ENCODE measurements at regions of chr12 and their contacts with region 1.

Region 1: GRCh38 chr12:121536899-121537813 is 43.7 kb downstream of the KDM2B start:
- DNase-seq: peak; percentile 79
- ATAC-seq: peak; percentile 45
- H3K4me3 Mint-ChIP-seq: peak overlapping the region; percentile 91
- H3K27ac Mint-ChIP-seq: peak overlapping the region; percentile 93
- H3K4me1 Mint-ChIP-seq: peaks cover 64% of the 10 kb centered on the region
- H3K27me3 Mint-ChIP-seq: no peaks in the 10 kb centered on the region
- CTCF ChIP-seq: no peak

Region 2: DNA sequence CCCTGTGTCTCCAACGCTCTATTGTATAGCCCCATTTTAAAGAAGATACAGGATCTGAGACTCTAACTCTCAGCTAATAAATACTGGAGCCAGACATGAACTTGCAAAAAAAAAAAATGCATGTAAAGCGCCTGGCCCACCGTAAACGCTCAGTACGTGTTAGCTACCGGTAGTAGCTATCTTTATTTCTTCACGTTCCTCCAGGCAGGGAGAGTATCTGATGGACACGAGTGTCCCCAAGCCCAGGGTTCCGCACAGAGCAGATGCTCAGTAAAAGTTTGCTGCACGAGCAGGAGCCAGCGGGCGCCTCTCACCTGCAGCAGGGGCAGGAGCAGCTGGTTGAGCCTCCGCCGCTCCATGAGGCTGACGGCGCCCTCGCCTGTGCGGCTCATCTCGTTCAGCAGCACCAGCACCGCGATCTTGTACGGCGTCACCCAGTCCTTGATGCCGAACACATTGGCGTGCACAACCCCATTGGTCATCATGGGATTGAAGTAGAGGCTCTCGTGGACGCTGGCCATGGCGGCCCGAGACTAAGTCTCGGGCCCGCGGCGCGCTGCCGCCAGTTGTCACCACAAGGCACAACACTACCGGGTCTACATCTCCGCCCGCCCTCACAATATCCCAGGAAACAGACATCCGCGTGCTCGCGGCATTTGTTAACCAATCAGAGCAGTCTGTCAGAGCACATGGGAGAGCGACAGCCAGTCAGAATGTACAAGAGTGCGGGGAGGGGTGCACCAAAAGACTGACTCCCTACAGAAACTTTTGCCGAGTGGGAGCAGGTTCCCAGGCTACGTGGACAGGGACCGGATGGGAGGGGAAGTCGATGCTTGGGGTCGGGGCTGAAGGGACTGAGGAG is 185.1 kb before region 1 on chr12 and contains the start of gene ANAPC5:
- CTCF ChIA-PET with region 1: no interaction called
- POLR2A ChIA-PET with region 1: interaction called, 13 read pairs
- intact Hi-C with region 1: no loop called
- DNase-seq: peak; percentile 73
- ATAC-seq: peak; percentile 99
- H3K4me3 Mint-ChIP-seq: peak within 1 kb of the TSS; percentile 94
- H3K27ac Mint-ChIP-seq: peak within 1 kb of the TSS; percentile 91
- H3K4me1 Mint-ChIP-seq: peaks cover 28% of the 10 kb centered on the region
- H3K27me3 Mint-ChIP-seq: no peaks in the 10 kb centered on the region
- CTCF ChIP-seq: no peak
- total RNA-seq, gene ANAPC5: 116 and 143 TPM in 2 replicates

Region 3: DNA sequence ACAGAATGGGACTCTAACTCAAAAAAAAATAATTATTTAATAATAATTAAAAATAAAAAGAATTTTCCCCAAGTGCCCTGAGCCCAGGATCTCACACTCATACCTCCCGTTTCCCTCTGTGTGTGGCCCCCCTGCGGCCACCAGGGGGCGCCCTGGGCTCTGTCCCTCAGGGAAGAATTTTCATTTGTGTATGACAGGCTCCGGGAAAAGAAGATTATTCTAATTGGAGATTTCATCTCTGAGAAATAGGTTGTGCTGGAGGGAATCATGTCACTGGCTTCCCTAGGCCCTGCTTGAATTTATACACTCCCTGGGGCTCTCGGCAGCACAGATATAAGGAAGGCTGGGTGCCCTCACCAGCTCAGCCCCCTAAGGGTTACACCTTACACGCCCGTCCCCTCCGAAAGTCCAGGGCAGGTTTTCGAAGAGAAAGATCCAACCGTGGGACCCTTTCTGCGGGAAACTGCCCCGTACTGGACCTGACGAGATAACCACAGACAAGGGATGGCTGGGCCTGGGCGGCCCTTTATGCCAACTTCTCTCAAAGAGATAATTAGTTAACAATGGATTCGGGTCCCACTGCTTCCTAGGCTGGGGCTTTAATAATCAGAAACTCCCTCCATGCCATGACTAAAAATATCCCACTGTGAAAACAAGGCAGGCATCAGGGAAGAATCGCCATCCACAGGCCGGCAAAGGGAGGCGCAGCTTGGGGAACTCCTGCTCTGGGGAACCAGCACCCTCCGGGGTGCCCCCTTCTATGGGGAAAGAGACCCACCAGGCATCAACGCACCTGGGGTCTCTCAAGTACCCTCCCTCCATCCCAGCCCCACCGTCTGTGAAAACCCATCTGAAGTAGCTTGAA is 37.0 kb before region 1 on chr12:
- CTCF ChIA-PET with region 1: interaction called, 13 read pairs
- POLR2A ChIA-PET with region 1: interaction called, 3 read pairs
- intact Hi-C with region 1: loop called (anchors 1 kb)
- DNase-seq: peak; percentile 69
- ATAC-seq: peak; percentile 82
- H3K4me3 Mint-ChIP-seq: no peak overlapping the region
- H3K27ac Mint-ChIP-seq: no peak overlapping the region
- H3K4me1 Mint-ChIP-seq: peaks cover 17% of the 10 kb centered on the region
- H3K27me3 Mint-ChIP-seq: no peaks in the 10 kb centered on the region
- CTCF ChIP-seq: peak; percentile 82

Region 4: GRCh38 chr12:121550974-121551634 is 13.9 kb after region 1 on chr12:
- CTCF ChIA-PET with region 1: interaction called, 9 read pairs
- POLR2A ChIA-PET with region 1: interaction called, 18 read pairs
- intact Hi-C with region 1: no loop called
- DNase-seq: no peak
- ATAC-seq: no peak
- H3K4me3 Mint-ChIP-seq: no peak overlapping the region
- H3K27ac Mint-ChIP-seq: no peak overlapping the region
- H3K4me1 Mint-ChIP-seq: peaks cover 24% of the 10 kb centered on the region
- H3K27me3 Mint-ChIP-seq: no peaks in the 10 kb centered on the region
- CTCF ChIP-seq: no peak

Region 5: DNA sequence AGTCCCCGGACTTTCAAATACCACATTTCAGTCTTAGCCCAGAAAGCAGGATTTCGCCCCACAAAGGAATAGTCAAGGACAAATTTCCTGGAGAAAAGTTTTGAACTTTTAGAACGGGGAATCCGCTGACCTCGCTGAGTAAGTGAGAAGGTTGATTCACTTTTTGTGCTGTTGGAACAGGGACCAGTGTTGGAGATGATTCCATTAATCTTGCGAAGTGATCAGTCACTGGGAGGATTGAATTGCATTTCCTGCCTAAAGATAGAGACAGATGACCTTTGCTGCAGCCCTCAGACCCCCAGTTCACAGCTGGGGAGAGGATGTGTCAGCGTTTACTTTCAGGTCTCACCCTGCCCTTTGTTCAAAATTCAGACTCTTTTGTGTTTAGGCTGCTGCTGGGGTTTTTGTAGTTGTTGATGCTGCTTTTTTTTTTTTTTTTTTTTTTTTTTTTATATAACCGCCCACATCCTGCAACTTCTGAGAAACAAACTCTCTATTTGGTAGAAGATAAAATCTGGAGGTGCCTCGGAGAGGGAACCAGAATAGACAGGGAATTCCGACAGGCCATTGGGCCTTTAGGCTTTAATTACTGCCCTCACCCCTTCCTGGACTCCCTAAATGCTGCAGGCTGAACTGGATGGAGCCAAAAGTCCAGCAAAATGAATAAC is 53.5 kb after region 1 on chr12:
- CTCF ChIA-PET with region 1: no interaction called
- POLR2A ChIA-PET with region 1: interaction called, 23 read pairs
- intact Hi-C with region 1: loop called (anchors 1 kb)
- DNase-seq: peak; percentile 33
- ATAC-seq: peak; percentile 65
- H3K4me3 Mint-ChIP-seq: peak overlapping the region; percentile 81
- H3K27ac Mint-ChIP-seq: peak overlapping the region; percentile 98
- H3K4me1 Mint-ChIP-seq: peaks cover 40% of the 10 kb centered on the region
- H3K27me3 Mint-ChIP-seq: no peaks in the 10 kb centered on the region
- CTCF ChIP-seq: no peak

Region 6: DNA sequence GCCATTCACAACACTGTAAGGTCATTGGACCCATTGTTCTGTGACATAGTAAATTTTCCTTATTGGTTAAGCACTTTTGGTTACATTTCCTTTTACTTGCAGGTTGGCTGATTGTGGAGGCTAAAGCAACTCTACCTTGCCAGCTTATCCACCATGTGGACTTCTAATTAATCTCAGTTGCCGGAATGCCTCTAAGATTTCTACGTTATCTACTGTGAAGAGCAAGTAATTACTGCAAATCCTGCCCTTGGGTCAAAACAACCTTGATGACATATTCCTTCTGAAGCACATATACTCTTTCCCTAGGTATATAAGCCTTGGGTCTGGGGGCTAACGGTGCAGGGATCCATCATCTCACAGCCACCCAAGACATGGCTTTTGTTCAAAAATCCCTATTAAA is 151.8 kb after region 1 on chr12:
- CTCF ChIA-PET with region 1: no interaction called
- POLR2A ChIA-PET with region 1: interaction called, 10 read pairs
- intact Hi-C with region 1: loop called (anchors 1 kb)
- DNase-seq: no peak
- ATAC-seq: no peak
- H3K4me3 Mint-ChIP-seq: no peak overlapping the region
- H3K27ac Mint-ChIP-seq: no peak overlapping the region
- H3K4me1 Mint-ChIP-seq: peaks cover 7% of the 10 kb centered on the region
- H3K27me3 Mint-ChIP-seq: no peaks in the 10 kb centered on the region
- CTCF ChIP-seq: no peak

Region 7: DNA sequence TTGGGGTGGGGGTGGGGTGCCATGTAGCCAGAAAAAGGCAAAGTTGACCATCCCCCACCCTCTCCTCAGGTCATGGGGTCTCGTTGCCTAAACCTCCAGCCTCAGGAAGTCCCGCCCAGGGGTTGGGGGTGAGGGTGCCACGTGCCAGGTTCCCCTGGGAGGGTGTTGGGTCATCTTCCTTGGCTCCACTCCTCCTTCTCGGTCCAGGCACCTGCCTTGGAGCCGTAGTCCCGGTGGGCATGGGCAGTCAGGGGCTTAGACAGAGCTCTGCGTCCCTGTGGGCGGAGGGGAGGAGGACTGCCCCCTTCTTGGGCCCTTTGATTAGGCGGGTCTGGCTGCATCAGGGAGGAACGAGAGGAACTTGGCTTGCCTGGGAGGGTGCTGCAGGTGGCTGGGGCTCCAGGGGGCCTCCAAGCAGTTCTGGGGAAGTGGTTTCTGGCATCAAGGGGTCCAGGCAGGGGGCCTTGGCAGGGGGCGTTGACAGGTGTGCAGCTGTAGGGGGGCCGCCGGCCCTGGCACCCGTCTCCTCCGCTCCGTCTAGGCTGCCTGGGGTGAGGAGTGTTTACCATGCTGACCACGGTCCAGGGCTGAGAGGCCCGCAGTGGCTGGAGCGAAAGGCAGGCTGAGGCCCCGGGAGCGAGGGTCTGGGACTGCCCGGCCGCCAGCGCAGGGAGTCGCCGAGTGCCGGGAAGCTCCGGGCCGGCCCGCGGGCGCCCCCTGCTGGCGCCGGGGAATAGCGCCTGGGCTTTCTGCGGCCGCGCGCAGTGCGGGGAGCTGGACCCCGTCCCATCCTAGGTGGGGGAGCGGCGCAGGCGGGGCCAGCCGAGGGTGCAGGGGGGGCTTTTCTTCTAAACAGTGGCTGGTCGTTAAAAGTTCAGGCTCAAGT is 274.5 kb after region 1 on chr12:
- CTCF ChIA-PET with region 1: no interaction called
- POLR2A ChIA-PET with region 1: interaction called, 11 read pairs
- intact Hi-C with region 1: no loop called
- DNase-seq: peak; percentile 81
- ATAC-seq: peak; percentile 83
- H3K4me3 Mint-ChIP-seq: peak overlapping the region; percentile 74
- H3K27ac Mint-ChIP-seq: peak overlapping the region; percentile 18
- H3K4me1 Mint-ChIP-seq: peaks cover 54% of the 10 kb centered on the region
- H3K27me3 Mint-ChIP-seq: no peaks in the 10 kb centered on the region
- CTCF ChIP-seq: peak; percentile 100

Measured in activated B cell treated with CpG ODN at 0.5 μM for 24 hours (primary cell).